ENCODE measurements at regions of chr1 and their contacts with region 1.

Region 1: GRCh38 chr1:226121587-226122400 is 59.3 kb downstream of the H3-3A start:
- DNase-seq: peak; percentile 75 to 91
- ATAC-seq: peak; percentile 87
- H3K4me3 ChIP-seq: peak overlapping the region; percentile 67 to 73
- H3K27ac ChIP-seq: no peak overlapping the region
- H3K4me1 ChIP-seq: no peaks in the 10 kb centered on the region
- H3K27me3 ChIP-seq: no peaks in the 10 kb centered on the region

Region 2: DNA sequence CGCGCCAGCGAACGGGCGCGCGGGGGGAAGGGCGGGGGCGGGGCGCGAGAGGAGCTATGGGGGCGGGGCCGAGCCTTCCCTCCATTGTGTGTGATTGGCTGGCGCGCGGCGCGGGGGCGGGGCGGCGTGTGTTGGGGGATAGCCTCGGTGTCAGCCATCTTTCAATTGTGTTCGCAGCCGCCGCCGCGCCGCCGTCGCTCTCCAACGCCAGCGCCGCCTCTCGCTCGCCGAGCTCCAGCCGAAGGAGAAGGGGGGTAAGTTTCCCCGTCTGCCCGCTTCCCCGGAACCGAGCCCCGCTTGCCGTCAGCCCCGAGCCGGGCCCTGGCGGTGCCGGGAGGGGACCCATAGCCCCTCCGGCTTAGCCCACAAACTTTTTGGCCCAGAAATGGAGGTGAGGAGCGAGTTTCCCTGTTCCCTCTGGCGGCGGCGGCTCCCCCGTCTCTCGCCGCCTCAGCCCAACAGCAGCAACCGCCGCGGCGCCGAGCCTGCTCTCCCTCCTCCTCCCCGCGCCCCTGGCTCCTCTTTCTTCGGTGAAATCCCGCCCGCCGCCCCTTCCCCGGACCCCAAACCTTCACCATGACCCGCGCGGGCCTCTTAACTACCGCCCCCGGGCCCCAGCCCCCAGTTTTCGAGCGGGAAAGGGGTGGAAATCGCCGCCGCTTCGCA is 59.1 kb before region 1 on chr1 and contains the start of gene H3-3A:
- intact Hi-C with region 1: loop called (anchors 1 kb)
- DNase-seq: peak; percentile 99 to 100
- ATAC-seq: peak; percentile 96
- H3K4me3 ChIP-seq: peak within 1 kb of the TSS; percentile 91 to 97
- H3K27ac ChIP-seq: peak within 1 kb of the TSS; percentile 44 to 94
- H3K4me1 ChIP-seq: peaks cover 0 to 5% of the 10 kb centered on the region in 2 donors
- H3K27me3 ChIP-seq: no peaks in the 10 kb centered on the region
- total RNA-seq, gene H3-3A: 310 to 349 TPM

Region 3: GRCh38 chr1:226083302-226084101 is 38.3 kb before region 1 on chr1:
- intact Hi-C with region 1: loop called in 1 of 2 experiments (anchors 5 kb)
- DNase-seq: peak; percentile 94 to 97
- ATAC-seq: peak; percentile 98
- H3K4me3 ChIP-seq: peak overlapping the region; percentile 44 to 61
- H3K27ac ChIP-seq: peak overlapping the region in 1 of 2 donors; percentile 35
- H3K4me1 ChIP-seq: no peaks in the 10 kb centered on the region
- H3K27me3 ChIP-seq: no peaks in the 10 kb centered on the region

Region 4: DNA sequence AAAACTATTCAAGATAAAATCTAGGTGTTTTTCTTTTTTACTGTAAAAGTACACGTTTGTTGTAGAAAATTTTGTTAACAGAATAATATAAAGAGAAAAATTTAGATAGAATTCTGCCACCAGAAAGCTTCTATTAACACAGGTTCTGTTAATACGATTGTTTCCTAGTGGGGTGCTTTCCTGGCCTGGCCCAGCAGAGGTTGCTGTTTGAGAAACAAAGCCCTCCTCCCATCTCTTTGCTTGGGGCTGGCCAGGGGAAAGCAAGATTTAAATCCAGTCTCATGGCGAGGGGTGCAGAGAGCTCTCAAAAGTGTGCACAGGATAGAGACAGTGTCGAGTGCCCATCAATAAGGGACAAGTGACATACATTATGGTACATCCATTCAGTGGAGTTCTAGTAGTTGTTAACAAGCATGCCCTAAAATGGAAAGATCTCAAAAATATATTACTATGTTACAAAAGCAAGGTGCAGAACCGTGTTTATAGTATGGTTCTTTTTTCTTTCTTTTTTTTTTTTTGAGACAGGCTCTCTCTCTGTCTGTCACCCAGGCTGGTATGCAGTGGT is 79.3 kb after region 1 on chr1:
- intact Hi-C with region 1: loop called (anchors 1 to 2 kb)
- DNase-seq: no peak
- ATAC-seq: no peak
- H3K4me3 ChIP-seq: no peak overlapping the region
- H3K27ac ChIP-seq: no peak overlapping the region
- H3K4me1 ChIP-seq: no peaks in the 10 kb centered on the region
- H3K27me3 ChIP-seq: no peaks in the 10 kb centered on the region

Region 5: GRCh38 chr1:226332947-226333346 is 211.2 kb after region 1 on chr1:
- intact Hi-C with region 1: loop called in 1 of 2 experiments (anchors 5 kb)
- DNase-seq: no peak
- ATAC-seq: no peak
- H3K4me3 ChIP-seq: no peak overlapping the region
- H3K27ac ChIP-seq: no peak overlapping the region
- H3K4me1 ChIP-seq: no peaks in the 10 kb centered on the region
- H3K27me3 ChIP-seq: no peaks in the 10 kb centered on the region

Measured in aorta (tissue), 5 donors.